SK-N-SH (cell line): ENCODE measurements at regions of chr2 and their contacts with region 1.

Region 1: GRCh38 chr2:43950383-43951008 is 45.3 kb downstream of the LRPPRC start:
- DNase-seq: peak; percentile 37
- H3K4me3 ChIP-seq: no peak overlapping the region
- H3K27ac ChIP-seq: no peak overlapping the region
- H3K4me1 ChIP-seq: no peaks in the 10 kb centered on the region; a peak in 1 of 4 replicates
- H3K27me3 ChIP-seq: no peaks in the 10 kb centered on the region
- CTCF ChIP-seq: peak; percentile 76
- EP300 ChIP-seq: no peak
- RAD21 ChIP-seq: peak; percentile 68

Region 2: GRCh38 chr2:43934567-43934966 is 15.9 kb before region 1 on chr2:
- CTCF ChIA-PET with region 1: interaction called, 34 read pairs
- POLR2A ChIA-PET with region 1: no interaction called
- DNase-seq: no peak
- H3K4me3 ChIP-seq: no peak overlapping the region
- H3K27ac ChIP-seq: no peak overlapping the region; a peak in 1 of 4 replicates
- H3K4me1 ChIP-seq: peaks cover 3 to 5% of the 10 kb centered on the region in 2 experiments; a peak in 3 of 4 replicates
- H3K27me3 ChIP-seq: no peaks in the 10 kb centered on the region
- CTCF ChIP-seq: no peak
- EP300 ChIP-seq: no peak
- RAD21 ChIP-seq: no peak

Region 3: DNA sequence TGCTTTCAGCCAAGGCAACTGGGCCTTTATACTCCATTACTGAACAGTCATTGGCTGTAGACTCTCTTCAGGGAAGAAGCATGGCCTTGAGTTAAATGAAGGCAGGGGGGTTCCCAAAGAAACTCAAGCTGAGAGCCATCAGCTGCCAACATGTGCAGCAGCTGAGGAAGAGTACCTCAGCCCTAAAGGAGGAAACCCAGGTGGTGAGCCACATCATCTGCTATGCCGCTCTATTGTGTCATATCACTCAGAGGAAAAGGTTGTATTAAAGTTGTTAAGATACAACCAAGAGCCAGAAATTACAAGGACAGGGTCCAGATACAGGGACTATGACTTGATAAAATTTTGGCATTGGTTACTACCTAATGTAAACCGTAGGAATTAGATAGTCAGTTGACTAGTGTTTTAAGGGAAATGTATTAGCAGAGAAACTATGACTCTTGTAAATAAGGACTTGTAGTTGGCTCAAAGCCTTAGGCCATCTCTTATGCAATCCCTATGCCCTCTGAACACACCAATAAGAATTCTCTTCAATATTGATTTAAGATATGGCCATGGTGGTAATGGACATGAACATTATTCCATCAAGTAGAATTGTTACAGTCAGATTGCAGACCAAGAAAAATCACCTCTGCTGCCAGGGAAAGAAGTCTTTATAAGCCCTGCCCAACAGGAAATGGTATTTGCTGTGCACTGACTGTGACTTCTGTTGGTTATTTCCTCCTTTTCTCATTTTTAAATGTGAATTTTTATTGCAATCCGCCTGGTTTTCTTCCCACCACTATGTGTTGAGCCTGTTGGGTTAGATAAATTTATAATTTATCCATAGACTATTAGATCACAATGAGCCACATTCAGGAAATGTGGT is 54.5 kb after region 1 on chr2:
- CTCF ChIA-PET with region 1: no interaction called
- POLR2A ChIA-PET with region 1: no interaction called
- DNase-seq: no peak
- H3K4me3 ChIP-seq: no peak overlapping the region
- H3K27ac ChIP-seq: no peak overlapping the region
- H3K4me1 ChIP-seq: peaks cover 0 to 5% of the 10 kb centered on the region in 2 experiments; a peak in 2 of 4 replicates
- H3K27me3 ChIP-seq: no peaks in the 10 kb centered on the region
- CTCF ChIP-seq: no peak
- EP300 ChIP-seq: no peak
- RAD21 ChIP-seq: no peak